ENCODE measurements at regions of chr19 and their contacts with region 1.

Region 1: DNA sequence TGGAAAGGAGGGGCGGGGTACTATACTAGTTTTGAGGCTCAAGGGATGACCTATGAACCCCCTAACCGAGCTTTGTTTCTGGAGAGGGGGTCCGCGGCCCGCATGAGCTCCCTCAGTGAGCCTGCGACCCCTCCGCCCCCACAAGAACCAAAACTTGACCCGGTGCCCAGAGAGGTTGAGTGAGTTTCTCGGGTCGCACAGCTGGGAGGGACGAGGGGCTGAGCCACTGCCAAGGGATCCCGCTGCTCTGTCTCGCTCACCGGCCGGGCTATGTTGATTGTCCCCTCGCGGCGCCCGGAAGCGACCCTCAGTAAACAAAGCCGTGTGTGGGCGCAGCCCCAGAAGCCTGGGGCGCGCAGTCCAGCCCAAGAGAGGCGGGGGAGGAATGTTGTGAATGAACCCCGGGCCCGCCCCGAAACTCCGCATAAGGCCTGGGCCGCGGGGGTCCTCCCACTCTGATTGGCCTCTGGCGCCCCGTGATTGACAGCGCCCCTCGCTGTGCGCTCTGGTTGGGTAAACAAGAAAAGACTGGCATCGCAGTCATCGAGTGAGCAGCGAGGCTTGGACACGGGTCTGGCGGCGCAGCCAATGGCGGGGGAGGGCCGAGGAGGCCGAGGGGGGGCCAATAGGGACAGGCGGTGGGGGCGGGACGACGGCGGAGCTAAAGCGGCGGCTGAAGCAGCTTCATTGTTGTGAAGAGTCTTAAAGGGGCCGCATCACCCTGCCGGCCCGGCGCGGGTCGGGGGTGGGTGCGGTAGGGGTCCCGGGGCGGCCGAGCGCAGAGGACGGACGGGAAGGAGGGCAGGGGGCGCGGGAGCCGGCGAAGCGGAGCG is at the start of gene ZSWIM4:
- DNase-seq: peak; percentile 98
- H3K4me3 Mint-ChIP-seq: peak within 1 kb of the TSS; percentile 95
- H3K27ac Mint-ChIP-seq: peak within 1 kb of the TSS; percentile 86
- H3K4me1 Mint-ChIP-seq: peaks cover 29% of the 10 kb centered on the region
- H3K27me3 Mint-ChIP-seq: no peaks in the 10 kb centered on the region
- total RNA-seq, gene ZSWIM4: 6.7 to 7.1 TPM

Region 2: DNA sequence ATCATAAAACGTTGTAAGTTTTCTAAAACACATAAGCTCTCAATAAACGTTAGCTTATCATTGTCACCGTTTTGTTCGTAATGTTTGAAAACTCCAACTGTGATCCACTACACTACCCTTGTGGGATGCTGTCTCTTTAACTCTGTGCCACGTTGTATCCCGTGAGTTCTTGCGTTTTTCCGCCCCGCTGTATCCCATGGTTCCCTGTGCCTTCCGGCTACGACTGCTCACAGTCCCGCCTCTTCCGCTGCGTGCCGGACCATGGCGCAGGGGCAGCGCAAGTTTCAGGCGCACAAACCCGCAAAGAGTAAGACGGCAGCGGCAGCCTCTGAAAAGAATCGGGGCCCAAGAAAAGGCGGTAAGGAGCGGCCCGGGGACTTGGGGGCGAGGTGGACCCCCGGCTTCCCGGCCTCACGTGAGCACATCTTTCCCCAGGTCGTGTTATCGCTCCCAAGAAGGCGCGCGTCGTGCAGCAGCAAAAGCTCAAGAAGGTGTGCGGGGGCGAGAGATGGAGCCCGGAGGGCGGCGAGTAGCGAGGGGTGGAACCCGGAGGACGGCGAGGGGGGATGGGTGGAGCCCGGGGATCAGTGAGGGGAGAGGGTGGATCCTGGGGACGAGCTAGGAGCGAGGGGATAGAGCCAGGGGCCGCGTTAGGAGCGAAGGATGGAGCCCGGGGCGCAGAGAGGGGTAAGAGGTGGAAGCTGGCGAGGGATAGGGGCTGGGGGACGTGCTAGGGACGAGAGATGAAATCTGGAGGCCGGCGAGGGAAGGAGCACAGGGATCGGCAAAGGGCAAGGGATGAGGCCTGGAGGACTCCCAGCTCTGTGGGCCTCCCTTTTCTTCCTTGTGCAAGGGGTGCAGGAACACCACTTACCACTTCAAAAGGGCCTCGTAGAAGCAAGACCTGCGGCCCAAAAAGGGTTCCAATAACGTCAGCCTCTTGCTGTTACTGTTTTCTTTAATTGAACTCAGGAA is 20.5 kb before region 1 on chr19 and contains the start of gene C19orf53:
- CTCF ChIA-PET with region 1: interaction called, 3 read pairs
- intact Hi-C with region 1: loop called (anchors 2 kb)
- DNase-seq: peak; percentile 92
- H3K4me3 Mint-ChIP-seq: peak within 1 kb of the TSS; percentile 98
- H3K27ac Mint-ChIP-seq: peak within 1 kb of the TSS; percentile 94
- H3K4me1 Mint-ChIP-seq: peaks cover 19% of the 10 kb centered on the region
- H3K27me3 Mint-ChIP-seq: no peaks in the 10 kb centered on the region
- total RNA-seq, gene C19orf53: 116 to 132 TPM

Region 3: DNA sequence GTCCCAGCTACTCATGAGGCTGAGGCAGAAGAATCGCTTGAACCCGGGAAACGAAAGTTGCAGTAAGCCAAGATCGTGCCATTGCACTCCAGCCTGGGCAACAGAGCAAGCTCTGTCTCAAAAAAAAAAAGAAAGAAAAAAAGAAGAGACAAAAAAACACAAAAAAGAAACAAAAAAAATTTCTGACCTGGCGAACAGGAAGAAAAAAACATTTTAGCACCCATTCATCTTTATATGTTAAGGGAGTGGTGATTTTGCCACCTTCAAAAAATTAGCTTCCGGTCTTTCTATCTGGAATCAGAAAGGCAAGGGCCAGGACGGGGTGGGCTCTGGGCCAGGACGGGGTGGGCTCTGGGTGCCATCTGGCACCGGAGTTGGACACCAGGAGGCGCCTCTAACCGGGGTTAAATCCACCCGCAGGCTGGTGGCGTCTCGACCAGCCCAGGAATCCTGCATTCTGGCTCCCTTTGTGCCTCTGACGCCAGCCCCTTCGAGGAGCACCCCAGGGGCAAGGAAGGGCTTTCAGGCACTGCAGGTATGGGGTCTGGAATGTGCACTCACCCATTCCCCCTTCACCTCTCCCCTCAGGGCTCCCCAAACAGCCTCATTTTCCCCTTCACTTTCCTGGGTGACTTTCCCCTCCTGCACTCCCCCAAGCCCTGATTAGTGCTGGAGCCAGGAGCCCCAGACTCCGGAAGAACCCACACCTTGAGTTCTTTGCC is 10.1 kb before region 1 on chr19:
- CTCF ChIA-PET with region 1: interaction called, 4 read pairs
- intact Hi-C with region 1: loop called (anchors 1 kb)
- DNase-seq: peak; percentile 87
- H3K4me3 Mint-ChIP-seq: peak overlapping the region; percentile 54
- H3K27ac Mint-ChIP-seq: peak overlapping the region; percentile 59
- H3K4me1 Mint-ChIP-seq: peaks cover 55% of the 10 kb centered on the region
- H3K27me3 Mint-ChIP-seq: no peaks in the 10 kb centered on the region

Region 4: DNA sequence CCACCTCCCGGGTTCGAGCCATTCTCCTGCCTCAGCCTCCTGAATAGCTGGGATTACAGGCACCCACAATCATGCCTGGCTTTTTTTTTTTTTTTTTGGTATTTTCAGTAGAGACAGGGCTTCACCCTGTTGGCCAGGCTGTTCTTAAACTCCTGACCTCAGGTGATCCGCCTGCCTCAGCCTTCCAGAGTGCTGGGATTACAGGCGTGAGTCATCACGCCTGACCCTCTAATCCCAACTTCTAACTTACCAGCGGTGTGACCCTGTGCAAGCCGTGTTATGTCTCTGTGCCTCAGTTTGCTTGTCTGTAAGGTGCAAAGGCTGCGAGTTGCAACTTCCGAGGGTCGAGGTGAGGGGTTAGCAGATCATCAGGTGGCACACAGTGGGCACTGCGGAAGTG is 17.6 kb after region 1 on chr19:
- CTCF ChIA-PET with region 1: no interaction called
- intact Hi-C with region 1: no loop called
- DNase-seq: no peak
- H3K4me3 Mint-ChIP-seq: no peak overlapping the region
- H3K27ac Mint-ChIP-seq: no peak overlapping the region
- H3K4me1 Mint-ChIP-seq: no peaks in the 10 kb centered on the region
- H3K27me3 Mint-ChIP-seq: no peaks in the 10 kb centered on the region

Region 5: DNA sequence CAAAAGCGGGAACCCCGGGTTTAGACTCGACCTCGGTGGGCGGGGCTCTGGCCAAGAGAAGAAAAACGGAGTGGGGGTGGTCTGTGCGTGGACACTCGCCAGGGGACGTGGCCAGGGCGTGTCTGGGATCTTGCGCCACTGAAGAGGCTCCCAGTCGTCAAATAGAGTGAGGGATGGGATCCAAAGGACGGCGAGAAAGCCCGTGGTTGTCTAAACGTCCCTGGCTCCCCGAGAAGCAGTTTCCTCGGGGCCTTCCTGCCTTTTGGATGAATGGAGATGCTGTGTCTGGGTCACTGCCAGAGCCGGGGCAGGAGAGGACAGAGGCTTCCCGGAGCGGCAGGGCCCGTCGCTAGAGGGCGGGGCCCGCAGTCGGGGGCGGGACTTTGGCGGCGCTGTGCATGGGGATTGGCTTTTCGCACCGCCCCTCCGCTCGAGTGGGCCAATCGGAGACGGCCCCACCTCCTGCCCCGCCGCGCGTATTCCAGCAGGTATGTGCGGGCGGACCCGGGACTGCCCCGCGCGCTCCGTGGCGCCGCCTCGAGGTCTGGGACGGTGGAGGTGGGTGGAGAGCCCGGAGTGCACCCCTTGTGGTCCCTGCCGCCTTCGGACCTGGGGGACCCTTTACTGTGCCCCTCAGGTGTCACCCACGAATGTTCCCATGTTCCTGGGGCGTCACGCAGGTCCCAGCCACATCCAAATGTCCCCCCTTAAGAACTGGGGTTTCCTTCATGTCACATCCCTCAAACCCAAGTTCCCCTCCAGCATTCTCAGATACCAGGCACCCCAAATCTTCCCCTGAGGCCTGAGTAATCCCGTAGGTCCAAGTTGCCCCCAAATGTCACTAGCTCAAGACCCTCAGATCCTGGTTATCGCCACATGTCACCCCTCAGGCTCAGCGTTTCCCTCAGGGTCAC is 38.6 kb after region 1 on chr19:
- CTCF ChIA-PET with region 1: interaction called, 4 read pairs
- intact Hi-C with region 1: loop called (anchors 1 kb)
- DNase-seq: peak; percentile 98
- H3K4me3 Mint-ChIP-seq: peak overlapping the region; percentile 84
- H3K27ac Mint-ChIP-seq: peak overlapping the region; percentile 99
- H3K4me1 Mint-ChIP-seq: peaks cover 35% of the 10 kb centered on the region
- H3K27me3 Mint-ChIP-seq: no peaks in the 10 kb centered on the region

Region 6: DNA sequence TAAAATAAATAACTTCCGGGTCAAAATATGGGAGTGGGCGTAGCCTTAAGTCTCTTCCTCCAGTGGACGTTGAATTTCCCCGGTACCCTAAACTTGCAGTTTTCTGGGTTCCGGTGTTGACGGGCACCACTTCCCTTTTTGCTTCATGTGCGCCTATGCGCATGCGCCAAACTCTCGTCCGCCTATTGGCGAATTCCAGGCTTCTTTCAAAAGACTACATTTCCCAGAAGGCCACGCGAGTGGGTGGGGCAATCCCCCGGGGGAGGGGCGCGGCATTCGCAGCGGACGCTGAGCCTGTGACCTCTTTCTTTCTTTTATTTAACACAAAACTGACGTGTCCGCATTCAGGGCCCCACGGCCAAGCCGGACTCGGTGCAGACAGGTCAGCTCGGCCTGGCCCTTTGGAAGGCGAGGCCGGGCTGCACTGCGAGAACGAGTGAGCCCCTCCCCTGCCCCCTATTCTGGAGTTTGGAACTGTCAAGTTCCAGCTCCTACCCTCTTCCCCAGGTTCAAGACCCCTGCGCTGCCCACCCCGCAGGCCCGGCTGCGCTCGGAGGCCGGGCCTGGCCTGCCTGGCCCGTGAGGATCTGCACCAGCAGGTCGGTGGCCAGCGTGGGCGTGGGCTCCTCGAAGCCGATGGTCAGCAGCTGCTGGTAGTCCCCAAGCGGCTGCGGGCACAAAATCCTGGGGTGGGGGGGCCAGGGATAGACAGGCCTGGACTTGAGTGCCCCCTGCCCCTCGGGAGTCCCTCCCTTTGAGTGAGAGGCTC is 286.5 kb after region 1 on chr19:
- CTCF ChIA-PET with region 1: no interaction called
- intact Hi-C with region 1: loop called (anchors 5 kb)
- DNase-seq: peak; percentile 100
- H3K4me3 Mint-ChIP-seq: peak overlapping the region; percentile 95
- H3K27ac Mint-ChIP-seq: peak overlapping the region; percentile 91
- H3K4me1 Mint-ChIP-seq: peaks cover 11% of the 10 kb centered on the region
- H3K27me3 Mint-ChIP-seq: no peaks in the 10 kb centered on the region